ENCODE measurements at regions of chr10 and their contacts with region 1.

Region 1: GRCh38 chr10:1788401-1788800 is 51.1 kb upstream of the ADARB2 start:
- DNase-seq: no peak
- ATAC-seq: no peak
- H3K4me3 ChIP-seq: no peak overlapping the region
- H3K27ac ChIP-seq: no peak overlapping the region
- H3K4me1 ChIP-seq: no peaks in the 10 kb centered on the region
- H3K27me3 ChIP-seq: peaks cover 0 to 1% of the 10 kb centered on the region in 2 experiments; a peak in 2 of 5 replicates
- CTCF ChIP-seq: no peak
- EP300 ChIP-seq: no peak
- POLR2A ChIP-seq: no peak
- RAD21 ChIP-seq: no peak

Region 2: DNA sequence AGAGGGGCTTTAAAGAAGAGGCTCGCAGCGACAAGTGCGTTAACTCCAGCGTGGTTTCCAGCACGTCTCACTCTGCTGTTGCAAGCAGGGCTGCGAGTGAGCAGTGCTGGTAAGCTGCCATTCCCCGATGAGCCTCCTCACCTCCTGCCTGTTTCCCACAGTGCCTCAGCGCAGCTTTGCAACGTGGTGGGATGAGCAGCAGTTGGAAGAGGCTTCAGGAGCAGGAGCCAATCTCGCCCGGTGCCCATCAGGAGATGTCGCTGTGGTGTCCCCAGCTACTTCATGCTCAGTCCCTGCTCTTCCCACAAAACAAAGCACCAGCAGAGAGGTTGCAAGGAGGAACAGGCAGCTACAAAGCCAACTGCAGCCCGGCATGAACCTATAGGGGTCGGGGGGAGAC is 48.6 kb before region 1 on chr10:
- CTCF ChIA-PET with region 1: no interaction called
- POLR2A ChIA-PET with region 1: no interaction called
- in situ Hi-C with region 1: loop called (anchors 5 kb)
- intact Hi-C with region 1: no loop called
- DNase-seq: no peak
- ATAC-seq: no peak
- H3K4me3 ChIP-seq: no peak overlapping the region
- H3K27ac ChIP-seq: no peak overlapping the region
- H3K4me1 ChIP-seq: no peaks in the 10 kb centered on the region
- H3K27me3 ChIP-seq: peaks cover 7 to 63% of the 10 kb centered on the region in 2 experiments
- CTCF ChIP-seq: no peak
- EP300 ChIP-seq: no peak
- POLR2A ChIP-seq: no peak
- RAD21 ChIP-seq: no peak

Measured in HepG2 (cell line).